Heart right ventricle (tissue), 16 donors: ENCODE measurements at regions of chr5 and their contacts with region 1.

Region 1: DNA sequence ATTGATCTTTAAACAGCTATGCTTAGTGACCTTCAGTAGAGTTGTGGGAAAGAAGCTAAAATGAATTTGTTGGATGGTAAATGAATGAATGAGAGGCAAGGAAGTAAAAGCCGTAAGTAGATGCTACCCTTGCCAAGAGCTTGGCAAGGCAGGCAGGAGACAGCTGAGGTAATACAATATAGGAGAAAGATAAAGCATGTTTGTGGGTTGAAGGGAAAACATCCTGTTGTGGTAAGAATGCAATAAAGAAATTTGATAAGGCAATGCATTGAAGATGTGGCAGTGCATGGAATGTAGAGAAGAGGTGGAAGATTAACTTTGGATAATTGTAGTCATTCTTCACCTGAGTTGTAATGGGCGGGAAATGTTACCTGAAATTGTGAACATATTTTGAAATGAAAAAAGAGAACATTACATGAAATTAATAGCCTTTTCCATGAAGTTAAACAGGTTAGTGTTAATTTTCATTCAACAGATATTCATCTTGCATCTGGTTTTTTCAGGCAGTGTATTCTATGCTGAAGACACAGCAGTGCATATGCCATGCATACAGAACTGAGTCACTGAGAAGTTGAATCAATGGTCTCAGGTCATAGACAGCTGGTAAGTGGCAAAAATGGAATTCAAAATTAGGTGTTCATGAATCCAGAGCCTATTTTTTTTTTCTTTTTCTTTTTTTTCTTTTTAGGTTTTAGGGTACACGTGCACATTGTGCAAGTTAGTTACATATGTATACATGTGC is 43.4 kb upstream of the SPINK5 start:
- DNase-seq: no peak
- ATAC-seq: no peak
- H3K4me3 ChIP-seq: no peak overlapping the region
- H3K27ac ChIP-seq: no peak overlapping the region
- H3K4me1 ChIP-seq: peaks cover 0 to 5% (median 0%) of the 10 kb centered on the region in 9 donors
- H3K27me3 ChIP-seq: no peaks in the 10 kb centered on the region
- CTCF ChIP-seq: no peak

Region 2: DNA sequence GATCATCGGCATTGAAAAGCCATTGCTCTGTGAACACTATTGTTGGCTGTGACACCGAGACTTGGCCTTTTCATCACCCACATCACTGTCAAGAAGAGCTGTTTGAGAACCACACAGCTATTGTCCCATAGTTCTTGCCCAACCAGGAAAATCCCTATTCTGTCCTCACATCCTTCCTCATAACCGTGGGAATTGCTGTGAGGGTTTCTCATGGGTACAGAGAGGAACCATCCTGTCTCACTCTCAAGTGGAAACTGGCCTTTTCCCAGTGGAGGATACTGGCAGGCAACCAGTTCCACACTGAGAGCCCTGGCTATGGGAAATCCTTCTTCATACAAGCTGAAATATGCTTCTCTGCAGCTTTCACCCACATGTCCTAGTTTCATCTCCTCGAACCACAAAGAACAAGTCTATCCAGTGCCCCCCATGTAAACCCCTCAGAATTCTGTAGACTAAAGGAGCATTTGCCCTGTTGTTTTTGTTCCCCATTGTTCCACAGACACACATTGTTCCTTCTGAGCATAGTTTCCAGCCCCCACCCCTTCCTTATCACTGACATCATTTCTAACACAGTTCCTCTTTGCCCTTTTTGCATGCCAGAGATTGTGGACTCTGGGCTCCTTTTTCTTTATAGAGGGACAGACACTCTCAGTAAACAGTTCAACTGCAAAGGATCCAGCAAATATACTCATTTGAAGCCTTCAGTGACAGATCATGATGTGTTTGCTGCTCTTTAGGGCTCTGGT is 56.3 kb before region 1 on chr5:
- intact Hi-C with region 1: loop called in 1 of 10 experiments (anchors 2 kb)
- DNase-seq: peak; percentile 7 to 44
- ATAC-seq: peak; percentile 58 to 95 (median 91)
- H3K4me3 ChIP-seq: no peak overlapping the region
- H3K27ac ChIP-seq: peak overlapping the region; percentile 59 to 89 (median 74)
- H3K4me1 ChIP-seq: peaks cover 0 to 36% (median 15%) of the 10 kb centered on the region in 9 donors
- H3K27me3 ChIP-seq: peaks cover 0 to 2% (median 0%) of the 10 kb centered on the region in 7 donors
- CTCF ChIP-seq: no peak

Region 3: GRCh38 chr5:148063861-148064260 is 43.4 kb after region 1 on chr5 and contains the start of gene SPINK5:
- intact Hi-C with region 1: no loop called
- DNase-seq: no peak
- ATAC-seq: no peak
- H3K4me3 ChIP-seq: no peak within 1 kb of the TSS
- H3K27ac ChIP-seq: no peak within 1 kb of the TSS
- H3K4me1 ChIP-seq: no peaks in the 10 kb centered on the region
- H3K27me3 ChIP-seq: no peaks in the 10 kb centered on the region
- CTCF ChIP-seq: no peak
- total RNA-seq, gene SPINK5: 0.07 to 1.2 (median 0.19) TPM in 9 of 10 donors, not detected in the other